Right cardiac atrium (tissue), 5 donors: ENCODE measurements at regions of chrX and their contacts with region 1.

Region 1: GRCh38 chrX:68511255-68511654 is 12.4 kb downstream of the YIPF6 start:
- DNase-seq: no peak
- ATAC-seq: no peak
- H3K4me3 ChIP-seq: no peak overlapping the region
- H3K27ac ChIP-seq: no peak overlapping the region
- H3K4me1 ChIP-seq: no peaks in the 10 kb centered on the region
- H3K27me3 ChIP-seq: no peaks in the 10 kb centered on the region

Region 2: GRCh38 chrX:68332201-68332731 is 179.0 kb before region 1 on chrX:
- intact Hi-C with region 1: no loop called
- DNase-seq: no peak
- ATAC-seq: peak; percentile 51 to 57
- H3K4me3 ChIP-seq: no peak overlapping the region
- H3K27ac ChIP-seq: no peak overlapping the region
- H3K4me1 ChIP-seq: no peaks in the 10 kb centered on the region
- H3K27me3 ChIP-seq: no peaks in the 10 kb centered on the region

Region 3: DNA sequence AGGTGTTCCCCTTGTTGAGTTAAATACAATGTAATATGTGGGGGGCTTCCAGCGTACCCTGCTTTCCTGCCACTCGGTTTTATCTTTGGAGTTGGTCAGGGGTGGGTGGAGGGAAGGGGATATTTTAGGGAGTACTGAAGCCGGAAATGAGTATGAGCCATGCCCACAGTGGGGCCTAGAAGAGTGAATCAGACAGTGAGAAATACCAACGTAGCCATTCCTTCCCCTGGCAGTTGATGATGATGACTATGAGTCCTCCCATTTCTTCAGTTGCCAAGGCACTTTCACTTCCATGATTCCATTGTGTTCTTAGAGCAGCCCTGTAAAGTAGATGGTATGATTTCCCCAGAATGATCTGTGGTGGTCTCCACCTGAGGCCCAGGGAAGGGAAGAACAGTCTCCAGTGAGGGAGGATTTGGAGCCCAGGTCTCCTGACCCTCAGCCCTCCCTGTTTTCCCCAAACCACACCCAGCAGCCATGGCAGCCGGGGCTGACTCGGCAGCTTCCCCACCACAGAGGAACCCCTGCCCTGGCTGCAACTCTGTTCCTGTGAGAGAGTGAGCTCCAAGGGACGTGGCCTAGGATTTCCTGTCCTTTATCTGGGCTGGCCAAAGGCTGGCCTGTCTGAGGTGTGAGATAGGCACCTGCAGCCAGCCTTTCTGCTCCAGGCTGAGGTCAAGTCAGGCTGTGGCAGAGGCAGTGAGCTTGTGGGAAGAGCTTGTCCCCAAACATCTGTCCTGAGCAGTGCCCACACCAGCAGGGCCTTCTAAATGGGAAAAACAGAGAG is 188.9 kb after region 1 on chrX:
- intact Hi-C with region 1: loop called in 1 of 4 experiments (anchors 10 kb)
- DNase-seq: peak in 2 of 3 donors; percentile 62 to 66
- ATAC-seq: peak; percentile 57 to 58
- H3K4me3 ChIP-seq: no peak overlapping the region
- H3K27ac ChIP-seq: peak overlapping the region; percentile 68
- H3K4me1 ChIP-seq: peaks cover 8% of the 10 kb centered on the region
- H3K27me3 ChIP-seq: no peaks in the 10 kb centered on the region

Region 4: GRCh38 chrX:68710870-68711576 is 199.8 kb after region 1 on chrX:
- intact Hi-C with region 1: loop called in 3 of 4 experiments (anchors 10 kb)
- DNase-seq: no peak
- ATAC-seq: peak; percentile 66 to 73
- H3K4me3 ChIP-seq: no peak overlapping the region
- H3K27ac ChIP-seq: no peak overlapping the region
- H3K4me1 ChIP-seq: peaks cover 9% of the 10 kb centered on the region
- H3K27me3 ChIP-seq: no peaks in the 10 kb centered on the region

Region 5: GRCh38 chrX:68807818-68808217 is 296.6 kb after region 1 on chrX:
- intact Hi-C with region 1: loop called in 3 of 4 experiments (anchors 10 kb)
- DNase-seq: peak in 1 of 3 donors; percentile 56
- ATAC-seq: peak; percentile 59 to 72
- H3K4me3 ChIP-seq: no peak overlapping the region
- H3K27ac ChIP-seq: no peak overlapping the region
- H3K4me1 ChIP-seq: no peaks in the 10 kb centered on the region
- H3K27me3 ChIP-seq: no peaks in the 10 kb centered on the region

Region 6: DNA sequence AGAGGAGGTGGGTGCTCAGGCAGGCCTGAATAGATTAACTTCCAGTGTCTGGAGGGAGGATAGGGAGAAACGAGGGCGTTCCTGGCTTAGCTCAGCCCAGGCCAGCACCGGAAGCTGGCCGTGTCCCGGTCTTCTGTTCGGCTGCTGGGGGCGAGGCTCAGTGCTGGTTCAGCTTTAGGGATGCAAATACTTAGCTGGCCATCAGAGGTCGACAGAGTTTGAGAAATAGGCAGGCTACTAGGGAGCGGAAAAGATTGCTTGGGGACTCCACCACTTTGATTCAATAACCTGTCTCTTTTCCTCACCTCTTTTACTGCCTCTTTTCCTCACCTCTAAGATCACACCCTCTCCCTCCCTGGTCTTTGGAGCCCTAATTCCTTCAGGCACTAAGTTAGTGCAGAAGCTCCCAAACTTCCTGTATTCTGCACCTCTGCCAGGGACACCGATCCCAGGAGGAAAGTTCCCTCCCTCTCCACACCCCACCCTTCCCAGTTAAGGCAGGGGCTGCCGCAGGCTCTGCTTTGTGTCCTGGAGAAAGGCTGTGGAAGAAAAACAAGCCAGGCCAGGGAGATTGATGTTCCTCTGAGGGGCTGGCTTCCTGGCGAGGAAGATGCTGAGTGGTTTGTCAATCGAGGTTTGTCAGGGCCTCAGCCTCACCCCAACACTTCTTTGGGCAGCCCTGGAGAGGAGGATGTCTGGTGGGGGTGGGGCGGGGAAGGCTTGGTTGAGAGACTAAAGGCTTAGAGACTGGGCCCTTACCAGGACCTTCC is 311.6 kb after region 1 on chrX:
- intact Hi-C with region 1: loop called in 1 of 4 experiments (anchors 10 kb)
- DNase-seq: peak; percentile 68 to 81 (median 77)
- ATAC-seq: peak; percentile 88 to 91
- H3K4me3 ChIP-seq: no peak overlapping the region
- H3K27ac ChIP-seq: no peak overlapping the region
- H3K4me1 ChIP-seq: no peaks in the 10 kb centered on the region
- H3K27me3 ChIP-seq: no peaks in the 10 kb centered on the region

Region 7: GRCh38 chrX:68894513-68895340 is 383.5 kb after region 1 on chrX:
- intact Hi-C with region 1: no loop called
- DNase-seq: peak; percentile 64 to 86 (median 84)
- ATAC-seq: peak; percentile 88 to 92
- H3K4me3 ChIP-seq: peak overlapping the region; percentile 12
- H3K27ac ChIP-seq: peak overlapping the region; percentile 100
- H3K4me1 ChIP-seq: peaks cover 13% of the 10 kb centered on the region
- H3K27me3 ChIP-seq: no peaks in the 10 kb centered on the region